Naive thymus-derived CD4-positive, alpha-beta T cell (primary cell): ENCODE measurements at regions of chr3 and their contacts with region 1.

Region 1: DNA sequence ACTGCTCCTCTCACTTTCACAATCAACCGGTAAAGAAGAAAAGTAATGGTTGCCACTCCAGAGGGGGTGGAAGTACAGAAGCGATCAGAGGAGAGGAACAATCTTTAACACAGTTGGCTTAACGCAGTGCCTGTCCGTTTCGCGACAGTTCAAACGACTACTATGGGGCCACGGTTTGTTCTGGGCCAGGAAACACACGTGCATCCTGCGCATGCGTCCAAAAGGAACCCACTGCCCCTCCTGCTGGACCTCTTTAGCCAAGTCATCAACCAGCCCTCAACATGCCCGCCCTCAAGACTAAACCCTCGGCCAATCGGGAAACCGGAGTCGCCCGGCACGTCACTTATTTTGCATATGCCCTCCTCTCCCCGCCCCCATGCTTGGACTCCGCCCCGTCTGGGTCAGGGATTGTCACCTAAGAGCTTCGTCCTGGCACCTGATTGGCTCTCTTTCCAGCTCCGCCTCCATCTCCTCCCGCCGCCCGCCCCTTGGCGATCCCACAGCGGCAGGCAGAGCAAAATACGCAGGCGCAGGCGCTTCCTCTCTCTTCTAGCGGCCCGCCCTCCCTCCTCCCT is 345 bp upstream of the CDV3 start:
- DNase-seq: peak; percentile 99 to 100 (median 100)
- ATAC-seq: peak; percentile 90
- H3K4me3 ChIP-seq: peak overlapping the region; percentile 59
- H3K4me3 Mint-ChIP-seq: peak overlapping the region; percentile 74 to 99 (median 89)
- H3K27ac ChIP-seq: peak overlapping the region; percentile 90
- H3K27ac Mint-ChIP-seq: peak overlapping the region; percentile 91 to 100 (median 98)
- H3K4me1 ChIP-seq: peaks cover 29 to 38% of the 10 kb centered on the region in 2 donors
- H3K4me1 Mint-ChIP-seq: peaks cover 26 to 67% (median 53%) of the 10 kb centered on the region in 7 donors
- H3K27me3 ChIP-seq: no peaks in the 10 kb centered on the region
- H3K27me3 Mint-ChIP-seq: no peaks in the 10 kb centered on the region

Region 2: GRCh38 chr3:132416807-132417694 is 1156.1 kb before region 1 on chr3 and contains the start of gene DNAJC13:
- CTCF ChIA-PET with region 1: no interaction called
- POLR2A ChIA-PET with region 1: interaction called, 3 read pairs
- intact Hi-C with region 1: loop called in 1 of 2 experiments (anchors 1 kb)
- DNase-seq: peak; percentile 80 to 93 (median 92)
- ATAC-seq: peak; percentile 97
- H3K4me3 ChIP-seq: peak within 1 kb of the TSS; percentile 94
- H3K4me3 Mint-ChIP-seq: peak within 1 kb of the TSS; percentile 97 to 100 (median 99)
- H3K27ac ChIP-seq: peak within 1 kb of the TSS; percentile 82
- H3K27ac Mint-ChIP-seq: peak within 1 kb of the TSS; percentile 93 to 99 (median 98)
- H3K4me1 ChIP-seq: peaks cover 7 to 11% of the 10 kb centered on the region in 2 donors
- H3K4me1 Mint-ChIP-seq: peaks cover 12 to 40% (median 33%) of the 10 kb centered on the region in 7 donors
- H3K27me3 ChIP-seq: no peaks in the 10 kb centered on the region
- H3K27me3 Mint-ChIP-seq: peaks cover 0 to 4% (median 0%) of the 10 kb centered on the region in 5 donors
- total RNA-seq, gene DNAJC13: 23.6 to 41.5 (median 37.5) TPM

Region 3: DNA sequence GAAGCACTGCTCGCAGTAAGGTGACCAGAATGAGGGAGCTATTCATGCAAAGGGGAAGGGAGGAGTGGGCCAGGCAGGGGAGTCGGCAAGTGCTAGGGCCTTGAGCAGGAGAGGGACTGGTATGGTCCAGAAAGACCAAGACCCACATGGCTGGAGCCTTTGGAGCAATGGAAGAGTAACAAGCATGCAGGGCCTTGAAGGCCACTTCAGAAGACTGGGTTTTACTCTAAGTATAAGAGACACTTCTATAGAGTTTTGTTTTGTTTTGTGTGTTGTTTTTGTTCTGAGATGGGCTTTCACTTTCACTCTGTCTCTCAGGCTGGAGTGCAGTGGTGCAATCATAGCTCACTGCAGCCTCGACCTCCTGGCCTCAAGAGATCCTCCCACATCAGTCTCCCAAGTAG is 131.3 kb before region 1 on chr3:
- CTCF ChIA-PET with region 1: no interaction called
- POLR2A ChIA-PET with region 1: interaction called, 6 read pairs
- intact Hi-C with region 1: loop called (anchors 1 to 5 kb)
- DNase-seq: peak in 5 of 9 donors; percentile 19 to 32 (median 24)
- ATAC-seq: peak; percentile 57
- H3K4me3 ChIP-seq: peak overlapping the region; percentile 44
- H3K4me3 Mint-ChIP-seq: peak overlapping the region; percentile 72 to 91 (median 87)
- H3K27ac ChIP-seq: peak overlapping the region; percentile 57
- H3K27ac Mint-ChIP-seq: peak overlapping the region; percentile 87 to 98 (median 94)
- H3K4me1 ChIP-seq: peaks cover 9 to 16% of the 10 kb centered on the region in 2 donors
- H3K4me1 Mint-ChIP-seq: peaks cover 15 to 31% (median 17%) of the 10 kb centered on the region in 7 donors
- H3K27me3 ChIP-seq: no peaks in the 10 kb centered on the region
- H3K27me3 Mint-ChIP-seq: no peaks in the 10 kb centered on the region

Region 4: GRCh38 chr3:133494469-133494868 is 78.7 kb before region 1 on chr3:
- CTCF ChIA-PET with region 1: interaction called, 80 read pairs
- POLR2A ChIA-PET with region 1: interaction called, 179 read pairs
- intact Hi-C with region 1: loop called in 1 of 2 experiments (anchors 1 kb)
- DNase-seq: no peak
- ATAC-seq: no peak
- H3K4me3 ChIP-seq: no peak overlapping the region
- H3K4me3 Mint-ChIP-seq: peak overlapping the region in 3 of 10 donors; percentile 5 to 56 (median 12)
- H3K27ac ChIP-seq: no peak overlapping the region
- H3K27ac Mint-ChIP-seq: peak overlapping the region in 5 of 9 donors; percentile 6 to 61 (median 23)
- H3K4me1 ChIP-seq: peaks cover 21 to 48% of the 10 kb centered on the region in 2 donors
- H3K4me1 Mint-ChIP-seq: peaks cover 30 to 60% (median 57%) of the 10 kb centered on the region in 7 donors
- H3K27me3 ChIP-seq: no peaks in the 10 kb centered on the region
- H3K27me3 Mint-ChIP-seq: no peaks in the 10 kb centered on the region

Region 5: DNA sequence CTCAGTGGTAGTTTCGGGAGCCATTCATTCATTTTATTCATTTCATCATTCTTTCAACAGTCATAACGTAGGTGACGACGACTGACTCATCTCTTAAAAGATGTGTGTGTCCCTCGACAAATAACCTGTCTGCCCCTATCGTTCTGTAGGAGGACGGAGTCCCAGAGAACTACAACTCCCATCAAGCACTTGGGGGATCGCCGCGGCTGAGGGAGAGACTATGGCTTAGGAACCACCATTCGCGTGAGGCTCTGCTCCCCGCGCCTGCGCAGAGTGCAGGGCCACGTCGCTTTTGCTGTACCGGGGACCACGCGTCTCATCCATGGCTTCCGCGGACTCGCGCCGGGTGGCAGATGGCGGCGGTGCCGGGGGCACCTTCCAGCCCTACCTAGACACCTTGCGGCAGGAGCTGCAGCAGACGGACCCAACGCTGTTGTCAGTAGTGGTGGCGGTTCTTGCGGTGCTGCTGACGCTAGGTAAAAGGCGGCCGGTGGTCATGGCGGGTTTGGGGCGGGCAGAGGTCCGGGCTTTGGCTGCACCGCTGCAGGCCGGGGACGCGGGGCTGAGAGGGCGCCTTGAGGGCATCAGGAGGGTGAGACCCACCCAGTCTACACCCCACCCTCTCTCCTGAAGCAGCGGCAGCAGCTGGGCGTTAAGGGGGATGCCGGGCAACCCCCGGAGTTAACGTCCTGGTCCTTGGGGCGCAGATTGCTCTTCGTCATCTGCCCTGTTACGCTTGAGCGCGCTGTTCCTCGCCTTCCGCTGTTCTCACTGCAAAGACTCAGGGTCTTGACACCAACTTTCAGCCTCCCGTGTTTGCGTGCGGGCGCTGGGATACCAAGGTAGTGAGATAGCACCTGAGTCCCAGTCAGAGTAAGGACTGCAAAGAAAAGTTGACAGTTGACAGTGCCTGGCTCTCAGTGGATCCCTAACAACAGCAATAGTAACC is 232.7 kb after region 1 on chr3 and contains the start of gene SRPRB:
- CTCF ChIA-PET with region 1: no interaction called
- POLR2A ChIA-PET with region 1: interaction called, 5 read pairs
- intact Hi-C with region 1: loop called (anchors 1 kb)
- DNase-seq: peak; percentile 91 to 96 (median 94)
- ATAC-seq: peak; percentile 98
- H3K4me3 ChIP-seq: peak within 1 kb of the TSS; percentile 76
- H3K4me3 Mint-ChIP-seq: peak within 1 kb of the TSS; percentile 90 to 99 (median 98)
- H3K27ac ChIP-seq: peak within 1 kb of the TSS; percentile 81
- H3K27ac Mint-ChIP-seq: peak within 1 kb of the TSS; percentile 70 to 98 (median 95)
- H3K4me1 ChIP-seq: peaks cover 7 to 8% of the 10 kb centered on the region in 2 donors
- H3K4me1 Mint-ChIP-seq: peaks cover 16 to 50% (median 34%) of the 10 kb centered on the region in 7 donors
- H3K27me3 ChIP-seq: no peaks in the 10 kb centered on the region
- H3K27me3 Mint-ChIP-seq: peaks cover 0 to 7% (median 5%) of the 10 kb centered on the region in 5 donors
- total RNA-seq, gene SRPRB: 27.4 to 63.3 (median 34.6) TPM

Region 6: GRCh38 chr3:134485718-134486576 is 912.8 kb after region 1 on chr3 and contains the starts of genes ANAPC13 and CEP63:
- CTCF ChIA-PET with region 1: no interaction called
- POLR2A ChIA-PET with region 1: interaction called, 4 read pairs
- intact Hi-C with region 1: loop called in 1 of 2 experiments (anchors 1 kb)
- DNase-seq: peak; percentile 84 to 96 (median 96)
- ATAC-seq: peak; percentile 89
- H3K4me3 ChIP-seq: peak within 1 kb of the TSS; percentile 84
- H3K4me3 Mint-ChIP-seq: peak within 1 kb of the TSS; percentile 89 to 100 (median 99)
- H3K27ac ChIP-seq: peak within 1 kb of the TSS; percentile 87
- H3K27ac Mint-ChIP-seq: peak within 1 kb of the TSS; percentile 94 to 100 (median 99)
- H3K4me1 ChIP-seq: peaks cover 20 to 23% of the 10 kb centered on the region in 2 donors
- H3K4me1 Mint-ChIP-seq: peaks cover 41 to 80% (median 69%) of the 10 kb centered on the region in 7 donors
- H3K27me3 ChIP-seq: no peaks in the 10 kb centered on the region
- H3K27me3 Mint-ChIP-seq: no peaks in the 10 kb centered on the region
- total RNA-seq, gene ANAPC13: 21.2 to 36.7 (median 25.0) TPM
- total RNA-seq, gene CEP63: 21.1 to 42.3 (median 26.4) TPM